ENCODE measurements at regions of chr1 and their contacts with region 1.

Region 1: GRCh38 chr1:234478481-234479309 is at the start of gene TARBP1:
- DNase-seq: peak; percentile 90
- H3K4me3 ChIP-seq: peak within 1 kb of the TSS; percentile 72
- H3K27ac ChIP-seq: peak within 1 kb of the TSS; percentile 81
- H3K4me1 ChIP-seq: peaks cover 49% of the 10 kb centered on the region
- CTCF ChIP-seq: 0 out of 2 replicates have a peak, but pooled peaks have one; percentile 13
- total RNA-seq, gene TARBP1: 30.0 and 30.5 TPM in 2 replicates

Region 2: GRCh38 chr1:234302354-234302962 is 176.2 kb before region 1 on chr1:
- CTCF ChIA-PET with region 1: no interaction called
- POLR2A ChIA-PET with region 1: no interaction called
- intact Hi-C with region 1: no loop called
- DNase-seq: no peak
- H3K4me3 ChIP-seq: no peak overlapping the region
- H3K27ac ChIP-seq: no peak overlapping the region
- H3K4me1 ChIP-seq: no peaks in the 10 kb centered on the region
- CTCF ChIP-seq: no peak

Region 3: GRCh38 chr1:234326497-234327366 is 152.0 kb before region 1 on chr1:
- CTCF ChIA-PET with region 1: no interaction called
- POLR2A ChIA-PET with region 1: no interaction called
- intact Hi-C with region 1: loop called (anchors 5 kb)
- DNase-seq: peak; percentile 58
- H3K4me3 ChIP-seq: no peak overlapping the region
- H3K27ac ChIP-seq: no peak overlapping the region
- H3K4me1 ChIP-seq: peaks cover 16% of the 10 kb centered on the region
- CTCF ChIP-seq: peak; percentile 89

Region 4: GRCh38 chr1:234437423-234438171 is 41.1 kb before region 1 on chr1:
- CTCF ChIA-PET with region 1: no interaction called
- POLR2A ChIA-PET with region 1: no interaction called
- intact Hi-C with region 1: no loop called
- DNase-seq: no peak
- H3K4me3 ChIP-seq: no peak overlapping the region
- H3K27ac ChIP-seq: no peak overlapping the region
- H3K4me1 ChIP-seq: no peaks in the 10 kb centered on the region
- CTCF ChIP-seq: no peak

Region 5: GRCh38 chr1:234541287-234541975 is 62.7 kb after region 1 on chr1:
- CTCF ChIA-PET with region 1: interaction called, 14 read pairs
- POLR2A ChIA-PET with region 1: no interaction called
- intact Hi-C with region 1: no loop called
- DNase-seq: no peak
- H3K4me3 ChIP-seq: no peak overlapping the region
- H3K27ac ChIP-seq: no peak overlapping the region
- H3K4me1 ChIP-seq: no peaks in the 10 kb centered on the region
- CTCF ChIP-seq: no peak

Region 6: DNA sequence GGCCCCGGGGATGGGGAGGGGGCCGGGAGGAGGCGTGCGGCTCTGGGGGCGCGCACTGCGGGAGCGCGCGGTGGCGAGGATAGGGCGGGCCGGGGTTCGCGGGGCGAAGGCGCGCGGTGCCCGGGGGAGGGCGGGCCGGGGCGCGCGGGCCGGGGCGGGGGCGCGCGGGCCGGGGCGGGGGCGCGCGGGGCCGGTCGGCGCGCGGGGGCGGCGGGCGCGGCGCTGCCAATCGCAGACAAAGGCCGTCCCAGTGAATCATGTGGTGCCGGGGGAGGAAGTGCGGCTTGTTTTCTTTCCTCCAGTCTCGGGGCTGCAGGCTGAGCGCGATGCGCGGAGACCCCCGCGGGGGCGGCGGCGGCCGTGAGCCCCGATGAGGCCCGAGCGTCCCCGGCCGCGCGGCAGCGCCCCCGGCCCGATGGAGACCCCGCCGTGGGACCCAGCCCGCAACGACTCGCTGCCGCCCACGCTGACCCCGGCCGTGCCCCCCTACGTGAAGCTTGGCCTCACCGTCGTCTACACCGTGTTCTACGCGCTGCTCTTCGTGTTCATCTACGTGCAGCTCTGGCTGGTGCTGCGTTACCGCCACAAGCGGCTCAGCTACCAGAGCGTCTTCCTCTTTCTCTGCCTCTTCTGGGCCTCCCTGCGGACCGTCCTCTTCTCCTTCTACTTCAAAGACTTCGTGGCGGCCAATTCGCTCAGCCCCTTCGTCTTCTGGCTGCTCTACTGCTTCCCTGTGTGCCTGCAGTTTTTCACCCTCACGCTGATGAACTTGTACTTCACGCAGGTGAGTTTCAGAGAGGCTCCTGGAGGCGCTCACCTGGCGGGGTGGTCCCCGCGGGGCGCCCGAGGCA is 1663.8 kb after region 1 on chr1 and contains the start of gene GPR137B:
- CTCF ChIA-PET with region 1: no interaction called
- POLR2A ChIA-PET with region 1: no interaction called
- intact Hi-C with region 1: loop called (anchors 10 kb)
- DNase-seq: peak; percentile 63
- H3K4me3 ChIP-seq: peak within 1 kb of the TSS; percentile 70
- H3K27ac ChIP-seq: no peak within 1 kb of the TSS
- H3K4me1 ChIP-seq: peaks cover 10% of the 10 kb centered on the region
- CTCF ChIP-seq: no peak
- total RNA-seq, gene GPR137B: 1.2 and 2.8 TPM in 2 replicates

Measured in OCI-LY7 (cell line).